Heart left ventricle (tissue), 16 donors: ENCODE measurements at regions of chr2 and their contacts with region 1.

Region 1: DNA sequence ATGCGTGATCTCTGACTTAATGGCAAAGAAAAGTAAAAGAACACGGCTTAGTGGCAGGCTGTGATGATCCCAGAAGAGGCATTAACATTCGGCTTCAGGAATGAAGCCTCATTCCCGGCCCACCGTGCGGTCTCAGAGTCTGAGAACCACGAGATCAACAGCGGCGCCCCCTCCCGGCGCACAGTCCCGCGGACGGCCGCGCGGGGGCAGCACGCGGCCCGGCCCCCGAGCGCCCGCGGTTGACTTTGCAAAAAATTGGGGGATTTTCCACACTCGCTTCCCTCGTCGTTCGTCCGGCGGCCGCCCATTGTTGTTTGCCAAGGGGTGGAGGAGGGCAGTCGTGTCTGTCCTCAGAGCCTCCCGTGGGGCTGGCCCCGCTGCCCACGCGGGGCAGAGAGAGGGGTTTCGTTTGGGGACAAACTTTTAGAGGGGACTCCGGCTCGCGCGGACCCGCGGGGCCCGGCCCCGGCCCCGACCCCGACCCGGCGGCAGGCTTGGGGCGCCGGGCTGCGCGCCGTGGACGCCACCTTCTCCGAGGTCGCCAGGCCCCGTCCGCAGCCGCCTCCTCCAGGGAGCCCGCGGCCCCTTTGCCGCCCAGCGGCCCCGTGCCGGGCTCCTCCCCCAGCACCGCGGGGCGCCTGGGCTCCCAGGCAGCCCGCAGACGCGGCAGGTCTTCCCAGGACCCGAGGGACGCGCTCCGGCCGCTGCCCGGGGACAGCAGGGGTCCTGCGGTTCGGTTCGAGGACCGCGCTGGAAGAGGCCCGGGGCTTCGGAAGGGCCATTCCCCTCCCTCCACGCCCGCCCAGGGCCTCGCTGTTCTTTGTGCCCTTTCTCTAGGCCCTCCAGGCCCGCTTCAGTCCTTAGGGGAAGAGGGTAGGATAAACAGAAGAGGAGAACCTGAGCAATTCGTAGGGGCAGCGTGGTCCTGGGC is 3.4 kb upstream of the HS6ST1 start:
- DNase-seq: peak; percentile 84 to 94 (median 88)
- ATAC-seq: peak; percentile 8 to 72 (median 70)
- H3K4me3 ChIP-seq: peak overlapping the region; percentile 31 to 76 (median 57)
- H3K27ac ChIP-seq: peak overlapping the region; percentile 18 to 79 (median 72)
- H3K4me1 ChIP-seq: peaks cover 2 to 42% (median 18%) of the 10 kb centered on the region in 12 donors
- H3K27me3 ChIP-seq: no peaks in the 10 kb centered on the region
- CTCF ChIP-seq: peak; percentile 92 to 100 (median 99)
- POLR2A ChIP-seq: peak in 1 of 2 donors; percentile 64

Region 2: GRCh38 chr2:128090945-128091725 is 230.9 kb before region 1 on chr2 and contains the start of gene UGGT1:
- intact Hi-C with region 1: no loop called
- DNase-seq: peak; percentile 93 to 96 (median 96)
- ATAC-seq: peak; percentile 99 to 100 (median 100)
- H3K4me3 ChIP-seq: peak within 1 kb of the TSS; percentile 73 to 100 (median 90)
- H3K27ac ChIP-seq: peak within 1 kb of the TSS; percentile 51 to 92 (median 86)
- H3K4me1 ChIP-seq: peaks cover 0 to 26% (median 13%) of the 10 kb centered on the region in 12 donors
- H3K27me3 ChIP-seq: no peaks in the 10 kb centered on the region
- CTCF ChIP-seq: peak in 1 of 12 donors; percentile 5
- POLR2A ChIP-seq: peak in 1 of 2 donors; percentile 78
- total RNA-seq, gene UGGT1: 24.0 to 77.4 (median 33.3) TPM

Region 3: GRCh38 chr2:128232965-128233789 is 88.9 kb before region 1 on chr2:
- intact Hi-C with region 1: loop called in 4 of 10 experiments (anchors 5 to 10 kb)
- DNase-seq: peak; percentile 87 to 95 (median 92)
- ATAC-seq: peak; percentile 89 to 98 (median 96)
- H3K4me3 ChIP-seq: peak overlapping the region; percentile 39 to 87 (median 68)
- H3K27ac ChIP-seq: peak overlapping the region; percentile 44 to 96 (median 83)
- H3K4me1 ChIP-seq: peaks cover 0 to 14% (median 5%) of the 10 kb centered on the region in 12 donors
- H3K27me3 ChIP-seq: peaks cover 0 to 4% (median 0%) of the 10 kb centered on the region in 9 donors
- CTCF ChIP-seq: peak; percentile 82 to 95 (median 92)
- POLR2A ChIP-seq: no peak

Region 4: DNA sequence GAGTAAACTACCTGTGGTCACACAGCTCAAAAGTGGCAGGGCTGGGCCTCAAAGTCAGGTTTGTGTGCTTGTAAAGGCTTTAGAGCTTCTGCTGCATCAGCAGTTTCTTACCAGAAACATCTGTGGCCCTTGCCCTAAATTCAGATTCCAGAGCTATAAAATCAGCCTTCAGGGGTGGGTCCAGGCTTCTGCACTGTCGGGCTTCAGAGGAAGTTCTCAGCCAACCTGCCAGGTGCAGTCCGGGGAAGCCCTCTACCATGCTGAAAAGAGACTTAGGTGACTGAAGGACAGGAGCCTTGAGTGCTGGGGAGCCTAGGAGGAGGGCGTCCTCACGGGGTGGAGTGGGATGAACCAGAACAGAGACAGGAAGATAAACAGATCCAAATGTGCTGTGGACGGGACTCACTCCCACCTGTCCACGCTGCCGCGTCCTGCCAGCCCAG is 66.5 kb after region 1 on chr2:
- intact Hi-C with region 1: loop called in 1 of 10 experiments (anchors 5 kb)
- DNase-seq: peak in 1 of 5 donors; percentile 8
- ATAC-seq: no peak
- H3K4me3 ChIP-seq: no peak overlapping the region
- H3K27ac ChIP-seq: no peak overlapping the region
- H3K4me1 ChIP-seq: peaks cover 0 to 6% (median 0%) of the 10 kb centered on the region in 12 donors
- H3K27me3 ChIP-seq: no peaks in the 10 kb centered on the region
- CTCF ChIP-seq: no peak
- POLR2A ChIP-seq: no peak

Region 5: DNA sequence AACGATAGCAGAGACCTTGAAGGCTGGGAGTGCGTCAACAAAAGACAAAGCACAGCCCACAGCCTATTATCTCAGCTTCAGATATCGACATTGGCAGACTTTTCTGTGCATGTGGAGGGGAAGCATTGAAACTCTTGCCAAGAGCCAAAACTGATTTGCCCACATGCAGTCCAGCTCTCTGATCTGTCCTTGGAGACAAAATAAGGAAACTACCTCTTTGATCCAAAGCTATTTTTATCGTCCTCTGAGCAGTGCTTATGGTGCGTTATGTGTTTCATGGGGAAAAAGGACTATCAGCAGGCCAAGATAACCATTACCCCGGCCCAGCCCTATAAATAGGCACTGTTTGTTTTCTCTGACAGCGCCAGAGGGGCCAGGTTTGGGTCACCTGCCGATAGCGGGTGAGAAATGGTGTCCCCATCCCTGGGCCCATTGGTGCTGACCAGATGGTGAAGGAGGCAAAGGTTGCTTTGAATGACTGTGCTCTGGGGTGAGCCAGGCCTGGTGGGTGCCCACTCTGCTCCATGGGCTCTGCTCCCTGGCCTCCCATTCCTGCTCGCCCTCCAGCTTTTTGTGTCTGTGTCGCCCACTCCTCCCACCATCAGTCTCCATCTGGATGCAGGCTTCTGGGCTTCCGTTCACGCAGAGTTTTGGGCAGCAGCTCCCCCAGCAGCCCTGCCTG is 172.7 kb after region 1 on chr2:
- intact Hi-C with region 1: loop called in 1 of 10 experiments (anchors 10 kb)
- DNase-seq: peak in 4 of 5 donors; percentile 43 to 66 (median 52)
- ATAC-seq: peak; percentile 86 to 89 (median 88)
- H3K4me3 ChIP-seq: no peak overlapping the region
- H3K27ac ChIP-seq: peak overlapping the region; percentile 27 to 84 (median 67)
- H3K4me1 ChIP-seq: peaks cover 0 to 31% (median 8%) of the 10 kb centered on the region in 12 donors
- H3K27me3 ChIP-seq: peaks cover 0 to 10% (median 0%) of the 10 kb centered on the region in 9 donors
- CTCF ChIP-seq: no peak
- POLR2A ChIP-seq: no peak

Region 6: GRCh38 chr2:128531856-128532255 is 209.8 kb after region 1 on chr2:
- intact Hi-C with region 1: loop called in 8 of 10 experiments (anchors 2 to 10 kb)
- DNase-seq: no peak
- ATAC-seq: no peak
- H3K4me3 ChIP-seq: no peak overlapping the region
- H3K27ac ChIP-seq: no peak overlapping the region
- H3K4me1 ChIP-seq: no peaks in the 10 kb centered on the region
- H3K27me3 ChIP-seq: no peaks in the 10 kb centered on the region
- CTCF ChIP-seq: peak in 9 of 12 donors; percentile 21 to 49 (median 28)
- POLR2A ChIP-seq: no peak

Region 7: DNA sequence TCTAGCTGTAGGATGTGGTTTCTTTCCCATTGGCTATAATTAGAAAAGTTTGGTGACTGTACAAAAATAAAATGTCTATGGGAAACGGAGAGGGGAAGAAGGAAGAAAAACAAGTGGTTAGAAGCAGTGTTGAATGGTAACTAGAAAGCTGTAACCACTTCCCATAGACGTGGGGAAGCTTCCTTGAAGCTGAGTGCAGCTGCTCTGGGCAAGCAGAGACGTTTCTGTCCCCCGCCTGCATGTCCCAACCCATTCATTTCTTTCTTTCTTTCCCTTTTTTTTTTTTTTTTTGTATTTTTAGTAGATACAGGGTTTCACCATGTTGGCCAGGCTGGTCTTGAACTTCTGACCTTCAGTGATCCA is 364.4 kb after region 1 on chr2:
- intact Hi-C with region 1: no loop called
- DNase-seq: no peak
- ATAC-seq: peak in 1 of 4 donors; percentile 41
- H3K4me3 ChIP-seq: no peak overlapping the region
- H3K27ac ChIP-seq: no peak overlapping the region
- H3K4me1 ChIP-seq: peaks cover 0 to 17% (median 0%) of the 10 kb centered on the region in 12 donors
- H3K27me3 ChIP-seq: no peaks in the 10 kb centered on the region
- CTCF ChIP-seq: no peak
- POLR2A ChIP-seq: no peak

Region 8: GRCh38 chr2:128736689-128737545 is 414.9 kb after region 1 on chr2:
- intact Hi-C with region 1: loop called in 2 of 10 experiments (anchors 10 kb)
- DNase-seq: peak; percentile 69 to 89 (median 76)
- ATAC-seq: peak; percentile 70 to 81 (median 74)
- H3K4me3 ChIP-seq: peak overlapping the region in 10 of 12 donors; percentile 6 to 53 (median 41)
- H3K27ac ChIP-seq: no peak overlapping the region
- H3K4me1 ChIP-seq: peaks cover 0 to 35% (median 20%) of the 10 kb centered on the region in 12 donors
- H3K27me3 ChIP-seq: no peaks in the 10 kb centered on the region
- CTCF ChIP-seq: peak; percentile 97 to 100 (median 99)
- POLR2A ChIP-seq: no peak

Region 9: DNA sequence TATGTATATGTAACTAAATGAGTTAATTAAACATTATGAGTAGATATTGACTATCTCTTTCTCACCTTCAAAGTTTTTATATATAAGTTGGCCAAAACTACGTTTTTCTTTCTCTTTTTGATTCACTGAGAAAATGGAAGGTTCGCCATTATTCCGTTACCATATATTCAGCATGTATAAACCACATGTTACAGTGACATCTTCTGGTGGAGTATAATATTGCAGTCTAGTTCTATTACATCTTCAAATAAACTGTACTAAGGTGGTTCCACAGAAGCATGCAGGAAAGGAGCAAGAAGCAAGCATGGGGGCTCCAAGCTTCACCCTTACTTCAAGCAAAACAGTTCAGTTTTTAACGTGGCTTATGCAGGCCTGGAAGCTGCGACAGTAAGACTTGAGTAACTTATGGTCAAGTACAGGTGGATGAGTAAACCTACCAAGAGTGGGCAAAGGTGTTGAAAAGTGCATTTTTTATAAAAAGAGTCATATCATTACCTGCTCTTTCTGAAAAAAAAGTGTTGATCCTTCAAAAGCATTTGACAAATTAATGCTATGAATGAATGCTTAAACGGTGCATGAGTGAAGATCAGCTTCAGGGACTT is 1527.6 kb after region 1 on chr2:
- intact Hi-C with region 1: loop called in 1 of 10 experiments (anchors 10 kb)
- DNase-seq: no peak
- ATAC-seq: peak in 3 of 4 donors; percentile 44 to 67 (median 58)
- H3K4me3 ChIP-seq: no peak overlapping the region
- H3K27ac ChIP-seq: no peak overlapping the region
- H3K4me1 ChIP-seq: no peaks in the 10 kb centered on the region
- H3K27me3 ChIP-seq: no peaks in the 10 kb centered on the region
- CTCF ChIP-seq: peak; percentile 63 to 84 (median 74)
- POLR2A ChIP-seq: no peak